ENCODE measurements at regions of chr17 and their contacts with region 1.

Region 1: DNA sequence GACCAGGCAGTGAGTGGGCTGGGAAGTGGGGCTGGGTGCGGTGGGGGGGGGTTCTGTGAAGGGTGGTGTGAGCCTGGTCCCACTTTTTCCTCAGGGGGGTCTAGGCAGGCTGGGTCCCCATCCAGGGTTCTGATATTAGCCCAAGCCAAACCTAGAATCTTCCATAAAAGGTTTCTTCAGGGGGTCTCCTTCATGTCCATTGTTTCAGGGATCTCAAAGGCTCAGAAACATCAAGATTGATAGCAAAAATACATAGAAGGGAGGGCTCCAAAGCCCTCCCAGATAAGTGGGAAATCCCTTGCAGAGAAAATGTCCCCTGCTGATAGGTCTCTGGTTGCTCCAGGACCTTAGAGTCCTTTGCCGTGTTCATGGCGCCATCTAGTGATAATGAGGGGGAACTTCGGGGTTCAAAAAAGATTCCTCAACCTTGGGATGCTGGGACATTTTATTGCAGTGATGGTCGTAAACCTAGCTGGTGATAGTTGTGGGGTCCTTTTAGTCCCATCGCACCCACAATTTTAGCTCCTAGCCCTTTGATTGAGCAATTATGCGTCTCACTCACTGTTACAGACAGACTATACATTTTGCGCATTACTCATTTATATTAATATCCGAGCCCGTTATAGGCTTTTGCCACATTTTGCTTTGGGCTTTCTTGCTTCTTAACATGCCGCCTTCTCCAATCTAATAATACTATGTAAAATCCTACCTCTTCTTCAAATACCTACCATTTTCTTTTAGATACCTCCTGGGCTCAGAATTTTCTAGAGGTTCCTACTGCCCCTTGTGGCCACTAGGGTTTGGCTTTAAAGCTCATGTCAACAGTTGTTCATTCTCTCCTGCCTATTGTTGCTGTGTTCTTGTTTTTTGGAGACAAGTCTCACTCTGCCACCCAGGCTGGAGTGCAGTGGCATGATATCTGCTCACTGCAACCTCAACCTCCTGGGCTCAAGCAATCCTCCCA is 35.1 kb downstream of the IGF2BP1 start:
- DNase-seq: peak; percentile 87
- CTCF ChIP-seq: peak; percentile 58

Region 2: GRCh38 chr17:48816774-48817590 is 215.3 kb before region 1 on chr17 and contains the start of gene TTLL6:
- in situ Hi-C with region 1: loop called (anchors 10 kb)
- DNase-seq: peak; percentile 84
- CTCF ChIP-seq: no peak